A549 (cell line): ENCODE measurements at regions of chr1 and their contacts with region 1.

Region 1: GRCh38 chr1:27284425-27285273 is 37.3 kb upstream of the TMEM222 start:
- DNase-seq: peak; percentile 73 to 84
- ATAC-seq: peak; percentile 93 to 95
- H3K4me3 ChIP-seq: no peak overlapping the region
- H3K27ac ChIP-seq: no peak overlapping the region
- H3K4me1 ChIP-seq: no peaks in the 10 kb centered on the region
- CTCF ChIP-seq: peak; percentile 78
- EP300 ChIP-seq: no peak
- POLR2A ChIP-seq: no peak
- RAD21 ChIP-seq: peak; percentile 73 to 76

Region 2: DNA sequence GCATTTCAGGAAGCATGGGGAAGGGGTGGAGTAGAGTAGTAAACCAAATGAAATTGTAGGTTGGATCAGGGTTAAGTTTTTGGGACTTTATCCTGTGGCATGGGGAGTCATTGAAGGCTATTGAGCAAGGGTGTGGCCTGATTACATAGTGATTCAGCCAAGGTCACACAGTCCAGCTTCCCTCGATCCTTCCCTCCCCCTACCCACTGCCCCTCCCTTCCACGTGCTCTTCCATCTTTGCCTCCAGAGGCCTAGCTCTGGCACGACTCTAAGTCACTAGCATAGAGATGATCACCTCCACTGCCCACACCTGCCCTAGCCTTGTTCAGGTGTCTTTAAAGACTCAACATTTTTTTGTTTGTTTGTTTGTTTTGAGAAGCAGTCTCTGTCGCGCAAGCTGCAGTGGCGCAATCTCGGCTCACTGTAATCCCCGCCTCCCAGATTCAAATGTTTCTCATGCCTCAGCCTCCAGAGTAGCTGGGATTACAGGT is 92.6 kb before region 1 on chr1:
- CTCF ChIA-PET with region 1: interaction called, 12 read pairs
- POLR2A ChIA-PET with region 1: no interaction called
- DNase-seq: peak; percentile 58 to 88
- ATAC-seq: peak; percentile 91 to 95
- H3K4me3 ChIP-seq: no peak overlapping the region
- H3K27ac ChIP-seq: peak overlapping the region; percentile 73 to 93
- H3K4me1 ChIP-seq: peaks cover 23% of the 10 kb centered on the region
- CTCF ChIP-seq: no peak
- EP300 ChIP-seq: no peak
- POLR2A ChIP-seq: no peak
- RAD21 ChIP-seq: no peak

Region 3: DNA sequence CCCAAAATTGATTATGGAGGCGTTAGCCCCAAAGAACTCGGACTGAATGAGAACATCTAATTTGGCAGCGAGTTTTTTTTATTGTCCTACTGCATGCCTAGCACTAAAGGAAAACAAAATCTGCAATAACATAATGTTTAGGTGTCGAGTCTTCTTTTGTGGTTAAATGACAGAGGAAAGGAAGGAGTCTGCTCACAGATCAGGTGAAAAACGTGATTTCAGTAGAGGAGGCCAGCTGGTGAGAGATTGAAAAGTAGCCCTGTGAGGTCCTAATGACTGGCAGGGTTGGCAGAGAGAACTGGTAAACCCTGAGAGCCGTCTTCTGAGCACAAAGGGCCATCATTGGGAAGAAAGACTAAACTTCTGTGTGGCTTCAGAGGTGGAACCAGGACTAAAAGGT is 26.1 kb before region 1 on chr1:
- CTCF ChIA-PET with region 1: interaction called, 10 read pairs
- POLR2A ChIA-PET with region 1: no interaction called
- DNase-seq: no peak
- ATAC-seq: no peak
- H3K4me3 ChIP-seq: no peak overlapping the region
- H3K27ac ChIP-seq: no peak overlapping the region
- H3K4me1 ChIP-seq: no peaks in the 10 kb centered on the region
- CTCF ChIP-seq: no peak
- EP300 ChIP-seq: no peak
- POLR2A ChIP-seq: no peak
- RAD21 ChIP-seq: no peak

Region 4: GRCh38 chr1:27316860-27317259 is 32.2 kb after region 1 on chr1:
- CTCF ChIA-PET with region 1: no interaction called
- POLR2A ChIA-PET with region 1: no interaction called
- DNase-seq: no peak
- ATAC-seq: no peak
- H3K4me3 ChIP-seq: no peak overlapping the region
- H3K27ac ChIP-seq: no peak overlapping the region
- H3K4me1 ChIP-seq: no peaks in the 10 kb centered on the region
- CTCF ChIP-seq: no peak
- EP300 ChIP-seq: no peak
- POLR2A ChIP-seq: no peak
- RAD21 ChIP-seq: no peak